Gastrocnemius medialis (tissue), 4 donors: ENCODE measurements at regions of chr6 and their contacts with region 1.

Region 1: DNA sequence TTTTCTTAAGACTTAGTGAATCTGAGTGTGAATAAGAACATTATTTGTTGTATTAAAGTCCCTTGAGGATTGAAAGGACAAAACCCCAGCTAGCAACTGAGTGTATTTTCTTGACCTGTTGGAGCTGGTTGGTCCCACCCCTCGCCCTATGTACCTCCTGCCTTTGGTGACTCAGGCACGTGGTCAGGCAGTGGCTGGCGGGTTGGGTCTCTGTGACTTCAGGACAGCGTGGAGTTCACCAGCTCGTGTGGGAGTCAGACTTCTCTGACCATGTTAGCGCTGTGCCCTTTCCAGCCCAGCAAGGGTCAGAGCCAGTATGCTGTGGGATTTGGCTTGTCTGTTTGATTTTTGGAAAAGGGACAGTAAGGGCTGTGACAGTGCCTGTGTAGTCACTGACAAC is 93.7 kb downstream of the SSR1 start:
- DNase-seq: peak in 1 of 2 donors; percentile 65
- ATAC-seq: peak; percentile 9 to 10
- H3K4me3 ChIP-seq: no peak overlapping the region
- H3K27ac ChIP-seq: peak overlapping the region; percentile 85 to 95 (median 94)
- H3K4me1 ChIP-seq: peaks cover 65% of the 10 kb centered on the region in 2 donors
- H3K27me3 ChIP-seq: no peaks in the 10 kb centered on the region
- CTCF ChIP-seq: no peak
- POLR2A ChIP-seq: no peak

Region 2: DNA sequence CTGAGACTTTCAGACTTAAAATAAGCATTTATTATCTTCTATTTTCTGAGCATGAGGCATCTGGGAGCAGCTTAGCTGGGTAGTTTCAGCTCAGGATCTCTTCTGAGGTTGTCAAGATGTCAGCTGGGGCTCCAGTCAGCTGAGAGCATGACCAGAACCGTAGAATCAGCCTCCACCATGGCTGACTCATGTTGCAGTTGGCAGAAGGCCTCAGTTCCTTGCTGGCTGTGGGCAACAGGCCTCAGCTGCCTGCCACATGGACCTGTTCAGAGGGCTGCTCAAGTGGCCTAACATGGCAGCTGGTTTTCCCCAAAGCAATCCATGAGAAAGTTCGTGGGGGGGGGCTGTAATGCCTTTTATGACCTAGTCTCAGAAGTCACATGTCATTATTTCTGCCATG is 488.5 kb before region 1 on chr6:
- in situ Hi-C with region 1: no loop called
- intact Hi-C with region 1: loop called (anchors 5 kb)
- DNase-seq: peak; percentile 93 to 98
- ATAC-seq: peak; percentile 95 to 97
- H3K4me3 ChIP-seq: no peak overlapping the region
- H3K27ac ChIP-seq: peak overlapping the region; percentile 79 to 89 (median 82)
- H3K4me1 ChIP-seq: peaks cover 0 to 22% of the 10 kb centered on the region in 2 donors
- H3K27me3 ChIP-seq: no peaks in the 10 kb centered on the region
- CTCF ChIP-seq: no peak
- POLR2A ChIP-seq: peak in 1 of 2 donors; percentile 34

Region 3: DNA sequence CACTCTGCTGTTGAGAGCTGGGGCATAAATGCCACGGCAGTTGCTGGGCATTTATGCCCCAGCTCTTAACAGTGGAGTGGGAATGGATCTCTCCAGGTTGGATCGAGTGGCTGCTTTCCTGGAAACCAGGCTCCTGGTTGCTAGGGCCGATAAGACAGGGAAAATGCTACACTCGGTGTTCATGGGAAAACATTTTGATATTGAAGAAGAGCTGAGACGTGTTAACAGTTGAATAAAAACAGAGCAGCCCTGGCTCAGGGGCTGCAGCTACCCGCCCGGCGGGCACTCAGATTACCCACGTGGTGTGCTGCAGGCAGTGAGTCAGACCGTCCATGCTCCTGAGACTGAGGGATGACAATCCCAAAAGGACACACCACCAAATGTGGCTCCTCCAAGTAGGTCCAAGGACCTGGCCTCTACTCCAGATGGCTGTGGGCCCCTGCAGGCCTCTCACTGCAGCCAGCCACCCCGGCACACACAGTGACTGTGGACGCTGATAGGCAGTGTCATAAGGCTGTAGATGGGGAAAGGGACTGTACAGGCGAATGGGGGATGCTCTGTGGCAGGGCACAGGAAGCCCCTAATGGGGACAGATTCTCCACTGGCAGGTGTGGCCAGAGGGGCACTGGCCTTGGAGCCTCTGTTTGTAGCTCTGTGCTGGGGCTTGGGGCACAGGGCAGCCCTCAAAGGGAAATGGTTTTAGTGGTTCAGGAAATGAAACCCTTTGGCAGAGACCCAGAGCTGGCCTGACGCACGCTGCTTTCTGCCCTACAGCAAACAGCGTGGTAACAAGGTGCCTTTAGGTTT is 393.0 kb before region 1 on chr6:
- in situ Hi-C with region 1: no loop called
- intact Hi-C with region 1: loop called (anchors 10 kb)
- DNase-seq: peak; percentile 88 to 95
- ATAC-seq: peak; percentile 73 to 82
- H3K4me3 ChIP-seq: peak overlapping the region; percentile 32 to 50 (median 39)
- H3K27ac ChIP-seq: peak overlapping the region; percentile 95 to 98 (median 98)
- H3K4me1 ChIP-seq: peaks cover 25 to 31% of the 10 kb centered on the region in 2 donors
- H3K27me3 ChIP-seq: no peaks in the 10 kb centered on the region
- CTCF ChIP-seq: no peak
- POLR2A ChIP-seq: peak; percentile 59 to 70

Region 4: GRCh38 chr6:7107578-7108195 is 111.6 kb before region 1 on chr6 and contains the start of gene RREB1:
- in situ Hi-C with region 1: loop called in 1 of 4 experiments (anchors 25 kb)
- intact Hi-C with region 1: loop called (anchors 2 kb)
- DNase-seq: peak; percentile 64 to 71
- ATAC-seq: peak; percentile 82 to 85
- H3K4me3 ChIP-seq: peak within 1 kb of the TSS; percentile 93 to 98 (median 96)
- H3K27ac ChIP-seq: peak within 1 kb of the TSS; percentile 85 to 96 (median 94)
- H3K4me1 ChIP-seq: peaks cover 17 to 22% of the 10 kb centered on the region in 2 donors
- H3K27me3 ChIP-seq: no peaks in the 10 kb centered on the region
- CTCF ChIP-seq: no peak
- POLR2A ChIP-seq: peak; percentile 85 to 91
- total RNA-seq, gene RREB1: 18.0 to 41.3 (median 39.2) TPM

Region 5: GRCh38 chr6:7166410-7167305 is 52.7 kb before region 1 on chr6:
- in situ Hi-C with region 1: loop called in 1 of 4 experiments (anchors 5 kb)
- intact Hi-C with region 1: loop called (anchors 2 kb)
- DNase-seq: no peak
- ATAC-seq: peak in 1 of 2 donors; percentile 12
- H3K4me3 ChIP-seq: no peak overlapping the region
- H3K27ac ChIP-seq: peak overlapping the region; percentile 69 to 80 (median 76)
- H3K4me1 ChIP-seq: peaks cover 81 to 87% of the 10 kb centered on the region in 2 donors
- H3K27me3 ChIP-seq: no peaks in the 10 kb centered on the region
- CTCF ChIP-seq: no peak
- POLR2A ChIP-seq: no peak

Region 6: DNA sequence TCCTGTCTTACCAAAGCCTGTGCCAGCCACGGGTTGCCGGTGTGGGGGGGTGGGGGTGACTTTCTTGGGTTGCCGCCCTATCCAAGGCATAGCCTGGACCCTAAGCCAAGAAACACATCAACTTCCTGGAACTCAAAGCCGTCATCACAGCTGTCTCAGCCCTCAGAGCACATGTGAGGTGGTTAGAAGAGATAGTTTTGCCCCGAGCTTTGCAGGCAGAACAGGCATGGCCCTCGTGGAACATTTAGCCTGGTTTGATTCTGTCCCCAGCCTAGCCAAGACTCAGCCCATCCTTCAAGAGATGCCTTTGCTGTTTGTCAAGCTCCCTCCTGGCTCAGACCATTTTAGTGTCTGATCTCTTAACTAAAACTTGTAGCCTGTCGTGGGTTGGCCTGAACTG is 46.7 kb before region 1 on chr6:
- in situ Hi-C with region 1: loop called in 1 of 4 experiments (anchors 5 kb)
- intact Hi-C with region 1: loop called (anchors 2 kb)
- DNase-seq: no peak
- ATAC-seq: peak in 1 of 2 donors; percentile 28
- H3K4me3 ChIP-seq: no peak overlapping the region
- H3K27ac ChIP-seq: peak overlapping the region; percentile 53 to 71 (median 60)
- H3K4me1 ChIP-seq: peaks cover 59 to 66% of the 10 kb centered on the region in 2 donors
- H3K27me3 ChIP-seq: no peaks in the 10 kb centered on the region
- CTCF ChIP-seq: no peak
- POLR2A ChIP-seq: no peak